ENCODE measurements at regions of chr15 and their contacts with region 1.

Region 1: GRCh38 chr15:56464893-56465520 is at the start of gene MNS1:
- DNase-seq: peak; percentile 20 to 86 (median 62)
- ATAC-seq: peak; percentile 93
- H3K4me3 ChIP-seq: peak within 1 kb of the TSS; percentile 18 to 45
- H3K4me3 Mint-ChIP-seq: peak within 1 kb of the TSS; percentile 87
- H3K27ac ChIP-seq: no peak within 1 kb of the TSS
- H3K27ac Mint-ChIP-seq: peak within 1 kb of the TSS; percentile 34
- H3K4me1 ChIP-seq: peaks cover 14% of the 10 kb centered on the region
- H3K4me1 Mint-ChIP-seq: peaks cover 32% of the 10 kb centered on the region
- H3K27me3 ChIP-seq: peaks cover 0 to 4% of the 10 kb centered on the region in 2 experiments
- H3K27me3 Mint-ChIP-seq: peaks cover 25% of the 10 kb centered on the region
- CTCF ChIP-seq: no peak
- total RNA-seq, gene MNS1: not detected

Region 2: DNA sequence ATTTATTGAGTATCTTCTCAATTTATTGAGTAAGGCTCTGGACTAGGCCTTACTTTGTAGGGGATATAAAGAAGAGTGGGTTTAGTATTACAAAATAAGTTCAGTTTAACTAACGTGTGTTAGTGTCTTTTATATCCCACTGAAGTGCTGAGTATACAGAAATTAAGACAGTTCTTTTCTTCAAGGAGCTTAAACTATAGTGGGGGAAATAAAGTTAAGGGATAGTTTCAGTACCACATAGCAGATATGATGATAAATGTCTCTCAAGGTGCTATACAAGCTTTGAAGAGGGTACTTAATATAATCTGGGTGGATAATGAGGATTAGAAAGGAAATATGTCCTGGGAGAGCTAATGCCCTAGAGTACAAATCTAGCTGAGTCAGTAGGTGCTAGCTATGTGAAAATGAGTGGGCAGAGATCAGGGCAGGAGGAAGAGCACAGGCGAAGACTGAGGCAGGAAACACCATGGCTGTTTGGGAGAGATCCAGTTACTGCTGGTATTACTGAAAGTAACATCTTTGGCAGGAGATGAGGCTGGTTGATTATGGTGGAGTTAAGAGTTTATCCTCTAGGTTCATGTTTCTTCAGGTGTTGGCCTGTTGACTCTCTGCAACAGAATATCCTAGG is 53.8 kb before region 1 on chr15:
- CTCF ChIA-PET with region 1: no interaction called
- POLR2A ChIA-PET with region 1: no interaction called
- intact Hi-C with region 1: loop called in 1 of 2 experiments (anchors 10 kb)
- DNase-seq: no peak
- ATAC-seq: no peak
- H3K4me3 ChIP-seq: no peak overlapping the region
- H3K4me3 Mint-ChIP-seq: no peak overlapping the region
- H3K27ac ChIP-seq: no peak overlapping the region
- H3K27ac Mint-ChIP-seq: no peak overlapping the region
- H3K4me1 ChIP-seq: no peaks in the 10 kb centered on the region
- H3K4me1 Mint-ChIP-seq: no peaks in the 10 kb centered on the region
- H3K27me3 ChIP-seq: no peaks in the 10 kb centered on the region
- H3K27me3 Mint-ChIP-seq: no peaks in the 10 kb centered on the region
- CTCF ChIP-seq: no peak

Region 3: GRCh38 chr15:56440214-56440770 is 24.7 kb before region 1 on chr15:
- CTCF ChIA-PET with region 1: no interaction called
- POLR2A ChIA-PET with region 1: no interaction called
- intact Hi-C with region 1: no loop called
- DNase-seq: no peak
- ATAC-seq: no peak
- H3K4me3 ChIP-seq: no peak overlapping the region
- H3K4me3 Mint-ChIP-seq: no peak overlapping the region
- H3K27ac ChIP-seq: no peak overlapping the region
- H3K27ac Mint-ChIP-seq: no peak overlapping the region
- H3K4me1 ChIP-seq: no peaks in the 10 kb centered on the region
- H3K4me1 Mint-ChIP-seq: no peaks in the 10 kb centered on the region
- H3K27me3 ChIP-seq: no peaks in the 10 kb centered on the region
- H3K27me3 Mint-ChIP-seq: peaks cover 3% of the 10 kb centered on the region
- CTCF ChIP-seq: no peak